AG04450 (cell line): ENCODE measurements at regions of chr15 and their contacts with region 1.

Region 1: GRCh38 chr15:101014921-101015841 is 96.0 kb downstream of the LRRK1 start:
- DNase-seq: no peak
- H3K4me3 ChIP-seq: no peak overlapping the region
- H3K27ac ChIP-seq: no peak overlapping the region
- H3K27me3 ChIP-seq: no peaks in the 10 kb centered on the region
- CTCF ChIP-seq: peak; percentile 97

Region 2: DNA sequence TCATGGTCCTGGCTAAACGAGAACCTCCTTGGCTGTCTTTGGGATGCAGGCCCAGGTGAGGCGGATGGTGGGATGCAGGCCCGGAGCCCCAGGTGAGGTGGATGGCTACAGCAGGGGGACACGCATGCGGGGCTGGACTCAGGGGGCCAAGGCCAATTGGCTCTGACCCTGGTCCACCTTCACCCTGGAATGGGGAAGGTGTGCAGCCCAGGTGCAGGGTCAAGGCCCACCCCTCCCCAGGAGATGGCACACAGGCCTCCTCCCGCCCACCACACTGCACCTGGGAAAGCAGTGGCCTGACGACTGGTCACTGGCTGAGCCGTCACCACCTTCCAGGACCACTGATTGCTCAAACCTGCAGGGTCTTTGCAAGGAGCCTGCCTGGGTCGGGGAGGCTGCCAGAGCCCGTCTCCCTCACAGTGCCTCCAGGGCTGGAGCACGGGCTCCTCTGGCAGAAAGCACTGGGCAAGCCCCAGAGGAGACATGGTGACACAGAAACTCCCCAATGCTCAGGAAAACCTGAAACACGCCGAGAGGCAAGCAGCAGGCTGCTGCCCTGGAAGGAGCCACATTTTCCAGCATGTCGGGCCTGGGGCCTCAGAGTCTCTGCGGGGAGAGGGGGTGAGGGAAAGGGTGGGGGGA is 63.6 kb after region 1 on chr15:
- CTCF ChIA-PET with region 1: no interaction called
- POLR2A ChIA-PET with region 1: no interaction called
- DNase-seq: no peak
- H3K4me3 ChIP-seq: no peak overlapping the region
- H3K27ac ChIP-seq: no peak overlapping the region
- H3K27me3 ChIP-seq: peaks cover 2% of the 10 kb centered on the region
- CTCF ChIP-seq: no peak

Region 3: GRCh38 chr15:101251830-101252820 is 236.9 kb after region 1 on chr15 and contains the start of gene CHSY1:
- CTCF ChIA-PET with region 1: interaction called, 49 read pairs
- POLR2A ChIA-PET with region 1: interaction called, 6 read pairs
- DNase-seq: peak; percentile 81
- H3K4me3 ChIP-seq: peak within 1 kb of the TSS; percentile 88
- H3K27ac ChIP-seq: peak within 1 kb of the TSS; percentile 65
- H3K27me3 ChIP-seq: no peaks in the 10 kb centered on the region
- CTCF ChIP-seq: no peak
- polyA plus RNA-seq, gene CHSY1: 44.6 and 49.2 TPM in 2 replicates

Region 4: DNA sequence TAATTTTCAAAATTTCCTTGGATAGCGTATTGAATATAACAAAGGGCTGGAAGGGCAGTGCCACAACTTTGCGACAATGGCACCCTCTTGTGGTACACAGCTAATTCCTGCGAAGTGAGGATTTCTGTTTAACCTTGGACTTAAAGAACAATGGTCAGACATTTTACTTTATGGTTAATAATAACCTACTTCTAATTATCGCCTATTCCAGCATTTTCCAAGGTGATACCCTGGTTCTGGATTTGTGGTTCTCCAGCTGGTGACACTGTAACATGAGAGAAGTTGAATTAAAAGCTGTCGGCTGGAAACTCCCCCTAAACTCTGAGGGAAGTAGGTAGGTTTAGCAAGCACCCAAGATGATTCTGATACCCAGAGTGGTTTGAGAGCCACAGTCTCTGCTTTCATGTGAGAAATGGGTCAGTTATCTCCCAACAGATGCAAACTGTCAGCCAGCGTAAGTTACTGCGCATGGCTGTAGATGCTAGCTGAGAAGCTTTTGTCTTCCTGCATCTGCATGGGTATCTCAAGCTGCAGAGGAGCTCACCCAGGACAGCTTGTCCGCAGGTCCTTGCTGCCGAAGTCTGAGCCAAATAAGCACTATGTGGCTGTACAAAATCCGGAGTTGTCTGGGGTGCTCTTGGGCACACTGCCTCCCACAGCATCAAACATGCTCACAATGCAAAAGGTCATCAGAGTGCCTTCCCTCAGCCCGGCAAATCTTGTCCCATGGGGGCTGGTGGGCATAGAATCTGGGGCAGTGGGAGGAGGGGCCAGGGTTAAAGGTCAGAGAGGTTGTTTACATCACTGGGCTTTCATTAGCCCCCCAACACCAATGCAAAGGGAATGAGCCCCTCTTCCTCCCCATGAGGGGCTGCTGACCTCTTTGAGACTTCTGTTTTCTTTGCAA is 243.3 kb after region 1 on chr15:
- CTCF ChIA-PET with region 1: interaction called, 49 read pairs
- POLR2A ChIA-PET with region 1: no interaction called
- DNase-seq: no peak
- H3K4me3 ChIP-seq: no peak overlapping the region
- H3K27ac ChIP-seq: no peak overlapping the region
- H3K27me3 ChIP-seq: no peaks in the 10 kb centered on the region
- CTCF ChIP-seq: peak; percentile 78

Region 5: DNA sequence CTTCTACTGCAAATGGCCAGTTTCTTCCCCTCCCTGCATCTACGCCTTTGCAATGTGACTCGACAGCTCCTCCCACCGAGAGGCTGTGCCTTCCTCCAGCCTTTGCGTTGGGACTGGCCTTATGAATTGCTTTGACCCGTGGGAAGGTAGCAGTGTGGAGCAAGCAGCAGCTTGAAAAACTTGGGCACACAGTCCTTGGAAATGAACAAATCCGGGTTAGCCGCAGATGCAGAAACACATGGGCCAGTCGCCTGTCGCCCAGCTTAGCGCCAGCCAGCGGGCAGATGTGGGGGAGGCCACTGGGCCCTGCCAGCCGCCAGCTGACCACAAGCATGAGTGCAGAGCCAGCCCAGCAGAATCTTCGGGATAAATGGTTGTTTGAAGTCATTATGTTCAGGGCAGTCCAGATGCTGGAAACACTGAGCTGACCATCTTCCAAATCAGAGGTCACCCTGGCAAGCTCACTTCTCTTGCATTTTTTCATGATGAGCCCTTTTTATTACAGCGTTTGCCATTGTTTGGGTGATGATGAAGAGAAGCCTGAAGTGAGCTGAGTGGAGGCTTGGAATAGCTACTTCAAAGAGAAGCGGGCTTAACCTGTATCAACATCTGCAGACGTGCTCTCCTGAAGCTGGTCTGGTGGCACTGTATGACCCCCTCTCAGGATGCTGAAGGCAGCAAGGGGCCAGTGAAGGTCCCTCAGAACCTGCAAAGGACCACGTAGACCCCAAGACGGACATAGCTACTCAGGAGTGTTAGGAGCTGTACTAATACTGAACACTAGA is 252.3 kb after region 1 on chr15:
- CTCF ChIA-PET with region 1: interaction called, 40 read pairs
- POLR2A ChIA-PET with region 1: no interaction called
- DNase-seq: no peak
- H3K4me3 ChIP-seq: no peak overlapping the region
- H3K27ac ChIP-seq: peak overlapping the region; percentile 88
- H3K27me3 ChIP-seq: no peaks in the 10 kb centered on the region
- CTCF ChIP-seq: no peak